ENCODE measurements at regions of chr5 and their contacts with region 1.

Region 1: GRCh38 chr5:76715736-76716455 is at the start of gene F2R:
- DNase-seq: peak; percentile 38
- ATAC-seq: peak; percentile 84
- H3K4me3 ChIP-seq: peak within 1 kb of the TSS; percentile 89
- H3K27ac ChIP-seq: peak within 1 kb of the TSS; percentile 25; the same call in 1 of the 2 replicates
- H3K4me1 ChIP-seq: peaks cover 5% of the 10 kb centered on the region; the same call in 1 of the 2 replicates
- H3K27me3 ChIP-seq: no peaks in the 10 kb centered on the region
- CTCF ChIP-seq: peak; percentile 42
- total RNA-seq, gene F2R: 16.1 and 16.9 TPM in 2 replicates

Region 2: GRCh38 chr5:76641514-76642120 is 74.3 kb before region 1 on chr5:
- CTCF ChIA-PET with region 1: no interaction called
- POLR2A ChIA-PET with region 1: no interaction called
- intact Hi-C with region 1: loop called (anchors 10 kb)
- DNase-seq: peak; percentile 73
- ATAC-seq: 0 out of 2 replicates have a peak, but pooled peaks have one; percentile 51
- H3K4me3 ChIP-seq: no peak overlapping the region
- H3K27ac ChIP-seq: no peak overlapping the region
- H3K4me1 ChIP-seq: no peaks in the 10 kb centered on the region
- H3K27me3 ChIP-seq: no peaks in the 10 kb centered on the region
- CTCF ChIP-seq: peak; percentile 84

Region 3: GRCh38 chr5:76746677-76747076 is 30.8 kb after region 1 on chr5:
- CTCF ChIA-PET with region 1: no interaction called
- POLR2A ChIA-PET with region 1: no interaction called
- intact Hi-C with region 1: loop called (anchors 2 kb)
- DNase-seq: peak; percentile 10
- ATAC-seq: no peak
- H3K4me3 ChIP-seq: no peak overlapping the region
- H3K27ac ChIP-seq: no peak overlapping the region
- H3K4me1 ChIP-seq: no peaks in the 10 kb centered on the region
- H3K27me3 ChIP-seq: no peaks in the 10 kb centered on the region
- CTCF ChIP-seq: 0 out of 2 replicates have a peak, but pooled peaks have one; percentile 31

Region 4: GRCh38 chr5:76771705-76772405 is 56.0 kb after region 1 on chr5:
- CTCF ChIA-PET with region 1: no interaction called
- POLR2A ChIA-PET with region 1: no interaction called
- intact Hi-C with region 1: loop called (anchors 5 kb)
- DNase-seq: no peak
- ATAC-seq: peak; percentile 27; the same call in 1 of the 2 replicates
- H3K4me3 ChIP-seq: no peak overlapping the region
- H3K27ac ChIP-seq: no peak overlapping the region
- H3K4me1 ChIP-seq: 0 out of 2 replicates have a peak, but pooled peaks cover 5% of the 10 kb centered on the region
- H3K27me3 ChIP-seq: no peaks in the 10 kb centered on the region
- CTCF ChIP-seq: no peak

Region 5: DNA sequence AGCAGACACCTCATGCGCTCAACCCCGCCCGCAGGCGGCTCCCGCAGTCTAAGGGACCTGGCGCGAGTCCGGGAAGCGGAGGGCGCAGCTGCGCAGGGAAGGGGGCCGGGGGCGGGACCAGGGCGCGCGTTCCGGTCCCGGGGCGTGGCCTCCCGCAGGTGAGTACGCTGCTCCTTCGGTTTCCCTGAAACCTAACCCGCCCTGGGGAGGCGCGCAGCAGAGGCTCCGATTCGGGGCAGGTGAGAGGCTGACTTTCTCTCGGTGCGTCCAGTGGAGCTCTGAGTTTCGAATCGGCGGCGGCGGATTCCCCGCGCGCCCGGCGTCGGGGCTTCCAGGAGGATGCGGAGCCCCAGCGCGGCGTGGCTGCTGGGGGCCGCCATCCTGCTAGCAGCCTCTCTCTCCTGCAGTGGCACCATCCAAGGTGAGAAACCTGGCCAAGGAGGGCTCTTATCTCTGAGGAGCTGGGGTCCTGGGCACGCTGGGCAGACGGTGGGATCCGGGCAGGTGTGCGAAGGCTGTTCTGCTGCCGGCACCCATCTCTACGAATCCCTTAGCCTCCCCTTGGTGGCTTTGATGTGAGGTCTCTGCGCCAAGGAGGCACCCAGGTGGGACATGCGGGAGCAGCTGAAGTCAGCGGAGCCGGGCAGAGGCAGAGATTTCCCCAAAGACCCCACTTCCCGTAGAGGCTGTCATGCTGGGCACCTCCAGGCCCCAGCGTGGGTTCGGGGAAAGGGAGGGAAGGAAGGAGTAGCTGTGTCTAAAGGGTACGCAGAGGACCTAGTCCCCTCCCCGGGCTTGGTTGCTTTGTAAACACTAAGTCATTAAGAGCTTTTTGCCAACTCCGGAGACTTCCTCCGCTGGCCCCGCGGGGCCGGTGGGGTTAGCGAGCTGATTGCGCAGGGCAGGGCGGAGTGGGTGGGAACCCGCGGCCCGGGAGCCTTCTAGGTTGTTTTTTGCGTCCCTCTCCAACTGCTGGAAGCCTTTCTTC is 103.2 kb after region 1 on chr5 and contains the start of gene F2RL1:
- CTCF ChIA-PET with region 1: no interaction called
- POLR2A ChIA-PET with region 1: no interaction called
- intact Hi-C with region 1: loop called (anchors 10 kb)
- DNase-seq: peak; percentile 93
- ATAC-seq: peak; percentile 65
- H3K4me3 ChIP-seq: peak within 1 kb of the TSS; percentile 79
- H3K27ac ChIP-seq: peak within 1 kb of the TSS; percentile 97
- H3K4me1 ChIP-seq: peaks cover 64% of the 10 kb centered on the region
- H3K27me3 ChIP-seq: no peaks in the 10 kb centered on the region
- CTCF ChIP-seq: no peak
- total RNA-seq, gene F2RL1: 163 and 167 TPM in 2 replicates

Region 6: GRCh38 chr5:77015938-77016569 is 300.2 kb after region 1 on chr5:
- CTCF ChIA-PET with region 1: no interaction called
- POLR2A ChIA-PET with region 1: no interaction called
- intact Hi-C with region 1: loop called (anchors 10 kb)
- DNase-seq: peak; percentile 62
- ATAC-seq: peak; percentile 52
- H3K4me3 ChIP-seq: no peak overlapping the region
- H3K27ac ChIP-seq: no peak overlapping the region
- H3K4me1 ChIP-seq: peaks cover 4% of the 10 kb centered on the region; the same call in 1 of the 2 replicates
- H3K27me3 ChIP-seq: no peaks in the 10 kb centered on the region
- CTCF ChIP-seq: peak; percentile 64